Sciatic nerve (tissue), 2 donors: ENCODE measurements at regions of chr6 and their contacts with region 1.

Region 1: DNA sequence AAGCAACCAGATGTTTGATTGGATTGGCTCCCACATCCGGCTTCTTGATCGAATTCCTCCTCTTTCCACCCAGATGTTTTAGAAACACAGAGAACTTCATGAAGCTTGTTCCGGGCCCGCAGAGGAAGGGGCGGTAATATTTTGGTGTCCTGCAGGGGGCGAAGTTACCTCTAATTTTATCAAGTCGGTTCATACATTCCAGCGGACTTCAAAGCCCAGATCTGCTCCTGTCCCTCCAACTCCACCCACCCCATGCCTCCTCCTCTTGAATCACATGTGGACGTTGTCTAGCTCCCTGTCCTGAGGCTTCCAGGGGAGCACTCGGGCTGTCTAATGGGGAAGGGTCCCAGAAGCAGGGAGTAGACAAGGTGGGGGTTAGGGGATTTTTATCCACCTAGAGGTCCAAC is 2.9 kb upstream of the BMP6 start:
- DNase-seq: peak; percentile 88
- ATAC-seq: peak; percentile 67

Region 2: DNA sequence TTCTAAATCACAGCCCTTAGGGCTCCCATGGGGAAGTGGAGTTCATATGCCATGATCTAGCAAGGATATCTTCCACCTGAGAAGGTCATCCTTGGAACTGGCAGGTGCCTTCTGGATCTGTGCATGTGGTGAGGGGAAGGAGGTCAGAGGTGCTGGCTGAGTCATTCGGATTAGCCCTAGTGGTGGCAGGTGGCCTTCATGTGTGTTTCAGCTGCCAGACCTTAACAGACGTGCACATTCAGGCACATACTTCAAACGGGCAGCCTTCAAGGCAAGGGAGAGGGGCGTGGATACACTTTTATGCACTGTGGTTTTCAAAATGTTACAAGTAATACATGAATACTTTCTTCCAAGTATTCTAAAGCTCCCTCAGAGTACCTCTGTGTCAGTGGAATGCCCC is 54.0 kb after region 1 on chr6:
- intact Hi-C with region 1: no loop called
- DNase-seq: no peak
- ATAC-seq: no peak

Region 3: DNA sequence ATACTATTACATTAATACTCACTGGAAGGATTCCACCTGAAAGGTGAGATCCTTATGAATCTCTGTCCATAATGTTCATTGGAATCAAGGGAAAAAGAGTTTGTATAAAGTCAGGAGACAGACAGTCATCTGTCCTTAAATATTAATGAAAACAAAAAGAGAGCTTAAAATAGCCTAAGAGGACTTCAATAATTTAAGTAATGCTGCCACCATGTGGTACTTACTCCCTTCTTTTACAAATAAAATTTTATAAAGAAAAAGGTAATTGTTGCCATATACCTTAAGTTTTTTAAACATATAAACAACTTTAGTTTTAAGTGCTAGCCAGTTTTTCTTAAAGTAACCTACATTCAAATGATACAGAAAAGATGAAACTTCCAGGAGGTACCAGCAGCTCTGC is 336.1 kb after region 1 on chr6:
- intact Hi-C with region 1: loop called (anchors 5 kb)
- DNase-seq: no peak
- ATAC-seq: no peak